CD8-positive, alpha-beta T cell (primary cell): ENCODE measurements at regions of chr3 and their contacts with region 1.

Region 1: DNA sequence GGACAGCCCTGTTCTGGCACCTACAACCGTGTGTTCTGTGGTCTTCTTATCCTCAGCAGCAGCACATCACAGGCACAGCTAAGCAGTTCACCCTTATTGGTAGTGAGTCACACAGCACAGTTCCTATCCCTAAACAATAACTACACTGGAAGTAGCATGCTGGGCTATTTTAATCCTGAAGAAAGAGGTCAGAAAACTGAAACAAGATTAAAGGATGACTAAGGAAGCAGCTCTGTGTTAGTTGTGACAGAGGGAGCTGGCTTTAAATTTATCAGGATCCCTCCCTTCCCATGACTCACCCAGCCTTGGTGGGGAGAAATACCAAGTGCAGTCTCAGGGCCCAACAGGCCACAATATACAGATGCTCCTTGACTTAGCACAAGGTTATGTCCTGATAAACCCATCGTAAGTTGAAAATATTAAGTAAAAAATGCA is 144.3 kb downstream of the ERC2 start:
- DNase-seq: no peak
- ATAC-seq: no peak
- H3K4me3 ChIP-seq: no peak overlapping the region
- H3K4me3 Mint-ChIP-seq: no peak overlapping the region
- H3K27ac ChIP-seq: no peak overlapping the region
- H3K27ac Mint-ChIP-seq: no peak overlapping the region
- H3K4me1 ChIP-seq: no peaks in the 10 kb centered on the region
- H3K4me1 Mint-ChIP-seq: no peaks in the 10 kb centered on the region
- H3K27me3 ChIP-seq: no peaks in the 10 kb centered on the region
- H3K27me3 Mint-ChIP-seq: peaks cover 8% of the 10 kb centered on the region
- CTCF ChIP-seq: no peak

Region 2: DNA sequence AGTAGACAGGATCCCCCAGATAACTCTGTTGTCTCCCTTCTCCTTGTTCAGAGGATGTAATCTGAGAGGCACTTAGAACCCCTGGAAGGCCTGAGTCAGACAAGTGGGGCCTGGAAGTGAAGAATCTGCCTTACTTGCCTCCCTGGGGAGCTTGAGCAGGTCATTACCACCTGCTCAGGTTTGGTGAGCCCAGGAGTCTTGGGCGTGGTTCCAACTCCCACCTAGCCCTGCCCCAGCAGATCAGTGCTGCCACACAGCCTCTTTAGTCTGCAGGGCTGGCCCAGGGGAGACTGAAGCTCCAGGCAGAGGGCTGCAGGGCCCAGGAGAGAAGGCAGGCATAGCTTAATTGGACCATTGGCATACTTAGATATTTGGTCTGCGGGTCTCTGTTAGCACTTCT is 85.7 kb before region 1 on chr3:
- CTCF ChIA-PET with region 1: no interaction called
- POLR2A ChIA-PET with region 1: no interaction called
- intact Hi-C with region 1: no loop called
- DNase-seq: no peak
- ATAC-seq: no peak
- H3K4me3 ChIP-seq: no peak overlapping the region
- H3K4me3 Mint-ChIP-seq: no peak overlapping the region
- H3K27ac ChIP-seq: no peak overlapping the region
- H3K27ac Mint-ChIP-seq: no peak overlapping the region
- H3K4me1 ChIP-seq: no peaks in the 10 kb centered on the region
- H3K4me1 Mint-ChIP-seq: no peaks in the 10 kb centered on the region
- H3K27me3 ChIP-seq: no peaks in the 10 kb centered on the region
- H3K27me3 Mint-ChIP-seq: peaks cover 2% of the 10 kb centered on the region
- CTCF ChIP-seq: no peak

Region 3: DNA sequence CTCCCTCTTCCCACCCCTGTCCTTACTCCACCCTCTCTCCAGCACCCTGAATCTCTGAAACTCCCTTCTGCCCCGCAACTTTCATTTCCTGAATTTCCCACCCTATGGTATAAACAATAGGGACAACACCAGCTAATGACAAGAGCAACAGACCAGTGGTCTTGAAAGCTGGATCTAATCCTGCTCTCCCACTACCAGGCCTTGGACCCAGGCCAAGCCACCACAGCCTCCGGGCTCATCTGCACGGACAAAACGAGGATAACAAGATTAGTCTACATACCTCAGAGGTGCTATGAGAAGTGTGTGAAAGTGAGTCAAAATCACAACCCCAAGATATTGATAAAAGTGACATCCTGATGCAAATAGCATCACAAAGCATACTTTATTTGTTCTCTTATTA is 15.7 kb after region 1 on chr3:
- CTCF ChIA-PET with region 1: interaction called, 14 read pairs
- POLR2A ChIA-PET with region 1: no interaction called
- intact Hi-C with region 1: no loop called
- DNase-seq: no peak
- ATAC-seq: no peak
- H3K4me3 ChIP-seq: no peak overlapping the region
- H3K4me3 Mint-ChIP-seq: no peak overlapping the region
- H3K27ac ChIP-seq: no peak overlapping the region
- H3K27ac Mint-ChIP-seq: no peak overlapping the region
- H3K4me1 ChIP-seq: no peaks in the 10 kb centered on the region
- H3K4me1 Mint-ChIP-seq: no peaks in the 10 kb centered on the region
- H3K27me3 ChIP-seq: no peaks in the 10 kb centered on the region
- H3K27me3 Mint-ChIP-seq: peaks cover 22% of the 10 kb centered on the region
- CTCF ChIP-seq: no peak